AG04449 (cell line): ENCODE measurements at regions of chr2 and their contacts with region 1.

Region 1: DNA sequence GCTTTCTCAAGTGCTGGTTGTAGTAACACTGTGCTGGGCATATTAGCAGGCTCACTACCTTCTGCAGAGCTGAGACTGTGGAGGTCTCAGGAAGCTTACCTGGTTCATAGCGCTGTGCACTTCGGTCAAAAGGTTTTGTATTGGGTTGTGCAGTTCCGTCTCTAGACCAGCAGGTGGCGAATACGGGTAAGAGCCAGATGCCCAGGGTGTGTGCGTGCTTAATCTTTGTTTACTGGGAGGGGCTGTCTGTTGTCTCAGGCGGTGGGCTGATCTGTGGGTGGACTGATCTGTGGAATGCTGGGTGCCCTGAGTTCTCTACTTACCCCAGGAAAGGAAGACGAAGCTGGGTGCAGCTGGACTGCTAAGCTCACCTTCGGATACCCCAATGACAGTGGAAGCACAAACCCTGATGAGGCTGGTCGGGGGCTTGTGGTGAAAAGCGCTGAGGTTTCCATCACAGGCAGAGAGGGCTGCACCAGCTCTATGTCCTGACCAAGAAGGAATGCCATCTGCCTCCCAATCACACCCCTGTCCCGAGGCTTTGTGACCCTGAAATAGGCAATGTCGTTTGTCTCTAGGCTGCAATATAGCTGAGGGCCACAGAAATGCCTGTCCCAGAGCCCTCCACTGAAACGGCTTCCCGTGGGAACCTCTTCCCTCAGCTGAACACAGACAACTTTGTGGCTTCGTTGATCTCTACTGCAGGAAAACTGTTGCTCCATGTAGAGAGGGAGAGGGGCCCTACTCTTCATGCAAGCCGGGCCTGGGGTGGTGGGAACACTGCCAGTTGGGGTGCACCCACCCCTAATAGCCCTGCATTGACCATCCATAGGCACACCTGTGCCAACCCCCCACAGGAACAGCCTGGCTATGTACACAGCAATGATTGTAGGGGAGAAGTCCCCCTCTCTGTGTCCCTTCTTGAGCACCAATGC is 45.9 kb upstream of the FAM117B start:
- DNase-seq: no peak
- H3K4me3 ChIP-seq: peak overlapping the region; percentile 27
- CTCF ChIP-seq: peak; percentile 86

Region 2: GRCh38 chr2:202577250-202578183 is 11.4 kb before region 1 on chr2:
- CTCF ChIA-PET with region 1: interaction called, 11 read pairs
- POLR2A ChIA-PET with region 1: no interaction called
- DNase-seq: no peak
- H3K4me3 ChIP-seq: no peak overlapping the region
- CTCF ChIP-seq: no peak

Region 3: GRCh38 chr2:202602285-202602684 is 13.4 kb after region 1 on chr2:
- CTCF ChIA-PET with region 1: interaction called, 67 read pairs
- POLR2A ChIA-PET with region 1: no interaction called
- DNase-seq: no peak
- H3K4me3 ChIP-seq: no peak overlapping the region
- CTCF ChIP-seq: no peak

Region 4: DNA sequence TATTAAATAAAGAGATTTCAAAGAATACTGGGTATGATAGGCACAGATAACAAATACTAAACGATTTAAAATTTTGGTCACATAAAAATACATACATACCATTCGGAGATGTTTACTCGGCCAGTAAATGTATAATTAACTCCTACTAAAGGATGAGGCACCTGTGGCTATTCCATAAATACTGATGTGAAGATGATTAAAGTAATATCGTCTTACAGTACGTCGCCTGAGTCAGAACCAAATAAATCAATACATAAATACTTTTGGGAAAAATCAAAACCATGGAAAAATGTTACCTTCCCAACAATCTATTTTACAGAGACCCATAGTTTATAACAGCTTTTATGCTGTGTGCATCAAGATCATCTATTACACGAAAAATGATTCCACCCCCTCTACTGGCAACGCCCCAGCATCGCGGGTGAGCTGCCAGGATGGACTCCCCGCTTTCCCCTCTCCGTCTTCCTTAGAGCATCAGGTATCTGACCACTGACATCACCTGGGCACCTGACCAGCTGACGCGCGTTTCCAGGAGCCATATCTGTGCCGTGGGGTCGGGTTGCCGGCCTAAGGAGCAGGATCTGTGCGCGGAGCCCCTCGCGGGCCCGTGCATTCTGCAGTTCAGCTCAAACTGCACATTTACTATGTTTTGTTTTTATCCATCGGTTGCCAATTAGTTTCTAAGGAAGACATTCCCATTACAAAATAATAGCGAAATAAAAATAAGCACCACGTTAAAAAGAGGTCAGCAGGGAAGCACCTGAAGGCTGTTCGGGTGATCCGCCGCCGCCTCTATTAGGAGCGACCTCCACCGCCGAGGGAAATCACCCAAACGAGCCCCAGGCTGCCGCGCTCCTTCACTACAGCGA is 281.8 kb after region 1 on chr2:
- CTCF ChIA-PET with region 1: interaction called, 18 read pairs
- POLR2A ChIA-PET with region 1: no interaction called
- DNase-seq: no peak
- H3K4me3 ChIP-seq: peak overlapping the region; percentile 76
- CTCF ChIP-seq: peak; percentile 48

Region 5: DNA sequence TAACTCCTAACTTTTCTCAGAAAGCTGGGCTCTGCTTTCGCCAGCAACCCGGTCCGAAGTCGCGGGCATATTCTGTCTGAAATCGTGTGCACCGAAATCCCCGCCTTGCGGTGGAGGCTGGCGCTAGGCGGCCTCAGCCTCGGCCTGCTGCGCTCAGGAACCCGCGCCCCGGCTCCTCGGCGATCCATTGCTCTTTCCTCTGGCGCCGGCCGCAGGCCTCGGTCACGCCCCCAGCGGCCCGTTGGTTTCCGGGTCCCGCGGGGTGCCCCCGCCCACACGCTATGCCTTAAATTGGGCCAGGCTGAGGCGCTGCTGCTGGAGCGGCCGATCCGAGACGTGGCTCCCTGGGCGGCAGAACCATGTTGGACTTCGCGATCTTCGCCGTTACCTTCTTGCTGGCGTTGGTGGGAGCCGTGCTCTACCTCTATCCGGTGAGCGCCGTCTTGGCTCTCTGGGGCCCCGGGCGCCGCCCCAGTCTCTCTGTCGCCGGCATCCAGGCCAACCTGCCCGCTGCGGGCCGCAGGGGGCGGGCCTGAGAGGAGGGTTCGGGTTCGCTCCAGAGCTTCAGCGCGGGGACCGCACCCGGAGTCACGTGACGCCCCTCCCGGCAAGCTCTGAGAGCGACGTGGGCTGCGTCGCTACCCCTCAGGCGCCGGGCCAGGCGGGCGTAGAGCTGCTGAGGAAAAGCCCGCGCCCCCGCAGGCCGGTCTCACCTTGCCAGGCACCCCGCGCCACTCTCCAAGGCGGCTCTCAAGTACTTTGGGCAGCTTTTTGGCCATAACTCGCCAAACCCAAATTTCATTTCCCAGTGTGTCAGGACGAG is 650.0 kb after region 1 on chr2 and contains the start of gene CYP20A1:
- CTCF ChIA-PET with region 1: interaction called, 10 read pairs
- POLR2A ChIA-PET with region 1: no interaction called
- DNase-seq: peak; percentile 60
- H3K4me3 ChIP-seq: peak within 1 kb of the TSS; percentile 66
- CTCF ChIP-seq: peak; percentile 52

Region 6: GRCh38 chr2:203909261-203909967 is 1320.5 kb after region 1 on chr2:
- CTCF ChIA-PET with region 1: interaction called, 20 read pairs
- POLR2A ChIA-PET with region 1: no interaction called
- DNase-seq: peak; percentile 41
- H3K4me3 ChIP-seq: peak overlapping the region; percentile 35
- CTCF ChIP-seq: peak; percentile 53